BJ (cell line): ENCODE measurements at regions of chr19 and their contacts with region 1.

Region 1: DNA sequence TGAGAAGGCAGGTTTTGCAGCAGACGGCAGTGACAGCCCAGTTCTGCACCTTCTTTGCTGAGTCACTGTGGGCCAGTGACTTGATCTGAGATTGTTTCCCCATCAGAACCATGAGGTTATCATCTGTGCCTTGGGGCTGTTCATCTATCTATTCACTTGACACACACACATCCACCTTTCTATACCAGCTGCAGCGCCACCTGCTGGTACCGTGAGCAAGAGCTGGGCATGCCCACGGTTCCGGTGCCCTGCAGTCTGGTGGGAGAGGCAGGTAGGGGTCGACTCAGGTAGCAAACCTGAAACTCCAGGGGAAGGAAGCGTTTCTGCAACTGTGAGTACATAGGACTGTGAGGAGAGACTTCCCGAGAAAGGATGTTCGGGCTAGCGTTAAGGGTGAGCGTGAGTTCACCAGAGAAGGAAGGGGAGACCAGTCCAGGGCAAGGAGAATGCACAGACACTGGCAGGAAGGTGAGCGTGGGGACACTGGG is 7.5 kb upstream of the LIN7B start:
- DNase-seq: no peak
- H3K4me3 ChIP-seq: no peak overlapping the region
- H3K27me3 ChIP-seq: no peaks in the 10 kb centered on the region
- CTCF ChIP-seq: peak; percentile 86

Region 2: DNA sequence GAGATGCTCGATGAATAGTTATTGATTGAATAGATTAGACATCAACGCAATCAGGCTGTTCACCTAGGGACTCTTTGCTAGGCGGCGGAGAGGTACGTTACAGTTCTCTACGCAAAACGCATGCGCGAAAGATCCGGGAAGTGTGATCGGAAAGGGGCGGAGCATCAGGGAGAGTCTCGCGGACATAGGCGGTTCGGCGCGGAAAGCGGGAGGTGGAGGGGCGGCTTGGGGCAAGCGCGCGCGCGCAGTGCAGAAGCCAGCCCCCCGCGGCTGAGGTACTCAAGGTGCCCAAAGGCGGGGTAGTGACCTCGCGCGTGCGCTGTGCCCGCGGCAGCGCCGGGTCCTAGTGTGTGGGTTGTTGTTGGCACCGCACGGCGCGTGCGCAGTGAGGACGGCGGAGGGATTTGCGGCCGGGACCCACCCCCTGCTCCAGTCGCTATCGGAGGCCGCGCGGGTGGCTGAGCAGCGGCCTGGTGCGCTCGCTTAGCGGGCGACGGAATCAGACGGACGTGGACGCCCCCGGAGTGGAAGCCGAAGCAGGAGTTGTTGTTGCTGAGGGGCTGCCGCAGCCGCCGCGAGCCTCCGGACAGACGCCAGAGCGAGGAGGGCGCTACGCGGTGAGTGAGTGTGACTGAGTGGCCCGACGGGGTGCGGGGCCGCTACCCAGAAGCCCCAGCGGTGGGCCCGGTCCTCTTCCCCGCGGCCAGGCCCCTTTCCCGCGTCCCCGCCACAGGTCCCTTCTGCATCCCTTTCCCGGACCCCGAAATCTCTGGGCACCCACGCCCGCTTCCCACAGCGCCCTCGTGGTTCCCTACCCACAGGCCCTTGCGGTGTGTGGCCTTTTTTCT is 21.4 kb before region 1 on chr19 and contains the start of gene SNRNP70:
- CTCF ChIA-PET with region 1: interaction called, 11 read pairs
- POLR2A ChIA-PET with region 1: no interaction called
- DNase-seq: peak; percentile 90
- H3K4me3 ChIP-seq: peak within 1 kb of the TSS; percentile 85
- H3K27me3 ChIP-seq: no peaks in the 10 kb centered on the region
- CTCF ChIP-seq: no peak
- polyA plus RNA-seq, gene SNRNP70: 125 and 268 TPM in 2 replicates

Region 3: DNA sequence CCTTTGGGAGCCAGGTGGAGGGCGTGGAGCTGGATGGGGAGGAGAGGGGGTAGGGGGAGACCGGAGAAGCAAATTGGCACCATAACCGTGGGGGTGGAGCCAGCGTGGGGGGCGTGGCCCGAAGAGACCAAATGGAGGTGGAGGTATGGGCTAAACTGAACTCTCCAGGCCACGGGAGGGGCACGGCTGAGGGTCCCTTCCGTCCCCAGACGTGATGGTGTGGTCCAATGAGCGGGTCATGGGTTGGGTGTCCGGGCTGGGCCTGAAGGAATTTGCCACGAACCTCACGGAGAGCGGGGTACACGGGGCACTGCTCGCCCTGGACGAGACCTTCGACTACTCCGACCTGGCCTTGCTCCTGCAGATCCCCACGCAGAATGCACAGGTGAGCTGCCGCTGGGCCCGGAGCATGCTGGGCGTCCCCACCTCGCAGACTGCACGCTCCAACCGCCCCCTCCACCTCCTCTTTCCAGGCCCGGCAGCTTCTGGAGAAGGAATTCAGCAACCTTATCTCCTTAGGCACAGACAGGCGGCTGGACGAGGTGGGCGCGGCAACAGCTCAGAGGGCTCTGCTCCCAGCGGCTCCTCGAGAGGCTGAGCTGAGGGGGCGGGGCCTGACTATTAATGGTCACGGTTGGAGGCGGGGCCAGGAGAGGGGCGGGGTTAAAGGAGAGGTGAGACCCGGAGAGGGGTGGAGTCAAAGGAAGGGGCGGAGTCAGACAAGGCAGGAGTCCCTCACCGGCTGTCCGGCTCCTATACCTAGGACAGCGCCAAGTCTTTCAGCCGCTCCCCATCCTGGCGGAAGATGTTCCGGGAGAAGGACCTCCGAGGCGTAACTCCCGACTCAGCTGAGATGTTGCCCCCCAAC is 42.3 kb after region 1 on chr19:
- CTCF ChIA-PET with region 1: interaction called, 17 read pairs
- POLR2A ChIA-PET with region 1: no interaction called
- DNase-seq: peak; percentile 45
- H3K4me3 ChIP-seq: peak overlapping the region; percentile 68
- H3K27me3 ChIP-seq: no peaks in the 10 kb centered on the region; the same call in 1 of the 2 replicates
- CTCF ChIP-seq: no peak

Region 4: DNA sequence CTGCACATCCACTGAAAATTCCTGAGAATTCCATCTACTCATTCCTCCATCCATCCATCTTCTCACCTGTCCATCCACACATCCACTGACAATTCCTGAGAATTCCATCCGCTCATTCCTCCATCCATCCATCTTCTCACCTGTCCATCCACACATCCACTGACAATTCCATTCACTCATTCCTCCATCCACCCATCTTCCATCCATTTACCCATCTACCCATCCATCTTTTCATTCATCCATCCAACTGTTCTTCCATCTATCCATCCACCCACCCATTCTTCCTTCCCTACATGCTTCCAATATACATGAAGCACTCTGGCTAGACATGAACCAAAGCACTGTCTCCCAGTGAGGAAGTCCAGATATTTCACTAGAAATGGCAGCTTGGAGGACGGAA is 66.5 kb after region 1 on chr19:
- CTCF ChIA-PET with region 1: no interaction called
- POLR2A ChIA-PET with region 1: no interaction called
- DNase-seq: no peak
- H3K4me3 ChIP-seq: no peak overlapping the region
- H3K27me3 ChIP-seq: no peaks in the 10 kb centered on the region
- CTCF ChIP-seq: no peak